Activated CD8-positive, alpha-beta T cell treated with anti-CD3 and anti-CD28 coated beads, Interleukin-2, amount 10 ng/mL, durations not matched to agents 7 days and 5 days (primary cell): ENCODE measurements at regions of chr6 and their contacts with region 1.

Region 1: DNA sequence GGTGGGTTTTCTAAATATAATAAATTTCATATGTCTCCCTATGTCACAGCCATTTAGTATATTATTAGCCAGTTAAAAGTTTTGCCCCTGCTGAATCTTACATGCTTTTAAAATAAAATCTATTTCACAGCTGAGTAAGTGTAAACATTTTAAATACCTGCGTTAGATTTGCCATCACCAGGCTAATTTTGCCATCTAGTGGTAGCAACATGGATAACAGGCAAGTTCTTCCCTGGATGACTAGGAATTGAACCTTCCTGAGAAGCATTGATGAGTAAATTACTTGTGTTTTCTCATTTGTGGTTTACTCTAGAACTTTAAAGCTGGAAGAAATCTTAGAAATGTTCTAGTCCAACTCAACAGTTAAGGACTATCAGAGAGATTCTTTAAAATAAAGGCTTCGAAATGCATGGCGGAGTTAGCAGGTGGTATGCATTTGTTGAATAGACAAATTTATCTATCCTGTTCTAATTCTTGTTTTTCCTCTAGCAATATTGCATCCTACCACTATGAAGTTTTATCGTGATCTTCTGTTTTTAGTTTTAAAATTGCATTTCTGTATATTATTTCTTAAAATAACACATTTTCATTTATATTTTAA is 2.6 kb downstream of the PRSS35 start:
- DNase-seq: peak; percentile 46
- ATAC-seq: no peak
- H3K4me3 Mint-ChIP-seq: no peak overlapping the region
- H3K27ac Mint-ChIP-seq: no peak overlapping the region
- H3K4me1 Mint-ChIP-seq: peaks cover 6% of the 10 kb centered on the region
- H3K27me3 Mint-ChIP-seq: peaks cover 27% of the 10 kb centered on the region

Region 2: GRCh38 chr6:83215131-83216047 is 299.6 kb before region 1 on chr6:
- CTCF ChIA-PET with region 1: interaction called, 60 read pairs
- POLR2A ChIA-PET with region 1: no interaction called
- DNase-seq: peak; percentile 73
- ATAC-seq: peak; percentile 91
- H3K4me3 Mint-ChIP-seq: no peak overlapping the region
- H3K27ac Mint-ChIP-seq: no peak overlapping the region
- H3K4me1 Mint-ChIP-seq: no peaks in the 10 kb centered on the region
- H3K27me3 Mint-ChIP-seq: peaks cover 18% of the 10 kb centered on the region

Region 3: GRCh38 chr6:83378621-83379388 is 136.2 kb before region 1 on chr6:
- CTCF ChIA-PET with region 1: no interaction called
- POLR2A ChIA-PET with region 1: no interaction called
- DNase-seq: no peak
- ATAC-seq: no peak
- H3K4me3 Mint-ChIP-seq: no peak overlapping the region
- H3K27ac Mint-ChIP-seq: no peak overlapping the region
- H3K4me1 Mint-ChIP-seq: no peaks in the 10 kb centered on the region
- H3K27me3 Mint-ChIP-seq: no peaks in the 10 kb centered on the region